ENCODE measurements at regions of chr13 and their contacts with region 1.

Region 1: DNA sequence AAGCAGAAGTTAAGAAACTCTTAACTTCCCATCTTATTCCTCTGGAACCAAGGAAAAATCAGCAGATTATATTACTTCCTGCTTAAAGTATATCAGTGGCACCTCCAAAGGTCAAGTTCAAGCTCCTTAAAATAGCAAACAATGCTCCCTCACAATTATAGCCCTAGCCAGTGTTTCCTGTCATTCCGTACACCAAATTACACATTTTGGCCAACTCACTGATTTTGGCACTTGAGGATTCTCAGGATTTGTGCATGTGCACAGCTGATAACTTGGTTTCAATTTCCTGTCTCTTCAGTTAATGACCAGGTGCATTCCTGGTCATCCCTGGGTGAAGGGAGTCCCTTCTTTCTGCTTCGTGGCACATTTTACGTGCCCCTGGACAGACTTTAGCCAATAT is 42.0 kb downstream of the TPP2 start:
- DNase-seq: no peak
- ATAC-seq: no peak
- H3K4me3 Mint-ChIP-seq: no peak overlapping the region
- H3K27ac Mint-ChIP-seq: no peak overlapping the region
- H3K4me1 Mint-ChIP-seq: no peaks in the 10 kb centered on the region
- H3K27me3 Mint-ChIP-seq: no peaks in the 10 kb centered on the region
- CTCF ChIP-seq: no peak

Region 2: DNA sequence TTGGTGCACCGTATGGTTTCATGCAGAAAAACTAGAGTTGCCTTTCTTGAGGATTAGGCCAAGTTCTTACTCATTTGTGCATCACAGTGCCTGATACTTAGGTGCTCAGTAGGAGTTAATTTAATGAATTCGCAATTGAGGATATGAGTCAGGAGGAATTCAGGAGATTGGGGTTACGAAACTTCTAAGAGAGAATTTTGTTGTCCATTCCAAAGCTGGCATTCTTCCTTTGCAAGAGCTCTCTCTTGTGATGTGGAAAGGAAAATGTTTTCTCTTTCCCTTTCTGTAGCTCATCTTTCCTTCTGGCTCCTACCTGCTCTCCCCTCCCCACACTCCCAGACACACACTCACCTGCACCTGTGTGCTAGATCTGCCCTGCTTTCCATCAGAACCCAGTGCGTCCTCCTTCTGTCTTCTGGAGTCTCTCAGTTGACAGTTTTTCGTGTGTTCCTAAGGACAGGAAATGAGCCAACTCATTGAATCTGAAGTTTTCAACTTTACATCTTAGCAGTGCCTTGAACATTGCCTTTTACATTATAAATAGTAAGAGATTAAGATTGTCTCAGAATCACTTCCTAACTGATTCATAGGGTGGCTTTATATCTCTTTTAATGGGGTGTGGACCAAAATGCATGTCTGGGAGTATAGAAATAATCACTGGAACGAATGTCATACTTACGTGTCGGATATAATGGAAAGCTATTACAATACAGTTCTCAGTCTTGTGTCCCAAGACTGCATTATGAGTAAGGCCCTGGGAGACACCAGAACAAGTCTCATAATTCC is 187.4 kb after region 1 on chr13:
- CTCF ChIA-PET with region 1: no interaction called
- POLR2A ChIA-PET with region 1: no interaction called
- intact Hi-C with region 1: loop called (anchors 1 kb)
- DNase-seq: no peak
- ATAC-seq: no peak
- H3K4me3 Mint-ChIP-seq: no peak overlapping the region
- H3K27ac Mint-ChIP-seq: no peak overlapping the region
- H3K4me1 Mint-ChIP-seq: no peaks in the 10 kb centered on the region
- H3K27me3 Mint-ChIP-seq: no peaks in the 10 kb centered on the region
- CTCF ChIP-seq: no peak